ENCODE measurements at regions of chr6 and their contacts with region 1.

Region 1: DNA sequence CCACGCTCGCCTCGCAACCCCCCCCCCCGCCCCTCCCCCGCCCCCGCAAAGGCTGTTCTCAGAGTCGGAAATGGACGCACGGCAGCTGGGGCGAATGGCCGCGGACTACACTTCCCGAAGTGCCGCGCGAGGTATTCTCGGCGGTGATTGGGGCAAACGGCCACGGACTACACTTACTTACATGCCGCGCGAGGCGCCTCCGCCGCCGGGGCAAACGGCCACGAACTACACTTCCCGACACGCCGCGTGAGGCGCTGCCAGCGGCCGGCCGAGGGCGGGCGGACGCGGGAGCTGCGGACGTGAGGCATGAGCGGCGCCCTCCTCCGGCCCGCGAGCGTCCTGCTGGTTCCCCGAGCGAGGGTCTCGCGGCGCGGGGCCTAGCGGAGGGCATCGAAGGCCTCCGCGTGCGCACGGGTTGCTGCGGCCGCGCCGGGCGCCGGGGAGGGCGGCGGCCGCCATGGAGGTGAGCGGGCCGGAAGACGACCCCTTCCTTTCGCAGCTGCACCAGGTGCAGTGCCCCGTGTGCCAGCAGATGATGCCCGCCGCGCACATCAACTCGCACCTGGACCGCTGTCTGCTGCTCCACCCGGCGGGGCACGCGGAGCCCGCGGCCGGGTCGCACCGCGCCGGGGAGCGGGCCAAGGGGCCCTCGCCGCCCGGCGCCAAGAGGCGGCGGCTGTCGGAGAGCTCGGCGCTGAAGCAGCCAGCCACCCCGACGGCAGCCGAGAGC is at the start of gene WRNIP1:
- DNase-seq: peak; percentile 92 to 99 (median 96)
- ATAC-seq: peak; percentile 83
- H3K4me3 ChIP-seq: peak within 1 kb of the TSS; percentile 78
- H3K4me3 Mint-ChIP-seq: peak within 1 kb of the TSS; percentile 97
- H3K27ac ChIP-seq: peak within 1 kb of the TSS; percentile 80 to 96
- H3K27ac Mint-ChIP-seq: peak within 1 kb of the TSS; percentile 97
- H3K4me1 ChIP-seq: peaks cover 34% of the 10 kb centered on the region
- H3K4me1 Mint-ChIP-seq: peaks cover 61% of the 10 kb centered on the region
- H3K27me3 ChIP-seq: no peaks in the 10 kb centered on the region
- H3K27me3 Mint-ChIP-seq: no peaks in the 10 kb centered on the region
- CTCF ChIP-seq: peak; percentile 44
- total RNA-seq, gene WRNIP1: 22.4 to 25.2 TPM

Region 2: GRCh38 chr6:2738373-2738979 is 26.9 kb before region 1 on chr6:
- CTCF ChIA-PET with region 1: interaction called, 6 read pairs
- POLR2A ChIA-PET with region 1: no interaction called
- intact Hi-C with region 1: loop called in 1 of 2 experiments (anchors 1 kb)
- DNase-seq: peak; percentile 21 to 75 (median 43)
- ATAC-seq: peak; percentile 75
- H3K4me3 ChIP-seq: no peak overlapping the region
- H3K4me3 Mint-ChIP-seq: no peak overlapping the region
- H3K27ac ChIP-seq: no peak overlapping the region
- H3K27ac Mint-ChIP-seq: no peak overlapping the region
- H3K4me1 ChIP-seq: no peaks in the 10 kb centered on the region
- H3K4me1 Mint-ChIP-seq: no peaks in the 10 kb centered on the region
- H3K27me3 ChIP-seq: no peaks in the 10 kb centered on the region
- H3K27me3 Mint-ChIP-seq: peaks cover 4% of the 10 kb centered on the region
- CTCF ChIP-seq: peak; percentile 65

Region 3: DNA sequence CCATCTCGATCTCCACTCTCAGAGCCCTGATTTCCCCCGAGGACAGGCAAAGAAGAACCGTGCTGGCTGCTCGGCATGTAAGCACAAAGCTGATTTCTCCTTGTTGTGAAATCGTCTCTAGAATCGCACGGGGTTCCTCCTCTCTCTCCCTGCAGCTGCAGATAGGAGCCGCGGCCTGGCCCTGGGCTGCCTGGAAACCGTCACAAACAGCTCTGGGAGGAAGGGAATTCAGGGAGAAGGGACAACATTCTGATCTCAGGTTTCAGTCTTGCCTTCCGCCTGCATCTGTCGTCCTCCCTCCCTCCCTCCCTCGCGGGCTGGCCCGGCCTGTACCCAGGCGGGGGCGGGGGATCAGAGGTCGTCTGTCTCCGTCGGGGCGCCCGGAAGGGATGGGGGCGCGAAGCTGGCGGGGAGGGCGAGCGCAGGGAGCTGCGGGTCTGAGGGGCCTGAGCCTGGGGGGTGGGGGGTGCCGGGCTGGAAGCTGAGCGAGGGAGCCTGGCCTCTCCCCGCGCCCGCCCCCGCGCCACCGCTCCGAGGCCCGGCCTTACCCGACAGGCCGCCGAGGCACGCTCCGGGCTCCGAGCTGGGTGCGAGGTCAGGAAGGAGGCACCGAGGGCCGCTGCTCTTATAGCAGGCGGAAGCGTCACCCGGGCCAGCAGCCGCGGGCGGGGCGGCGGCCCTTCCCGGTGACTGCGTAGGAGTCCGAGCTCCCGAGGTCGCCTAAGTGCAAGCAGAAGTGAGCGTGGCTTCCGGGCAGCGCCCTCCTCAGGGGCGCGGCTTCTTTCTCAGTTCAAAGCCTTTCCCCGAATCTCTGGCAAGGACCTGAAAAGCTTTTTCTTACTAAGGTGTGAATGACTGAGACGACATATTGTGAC is 76.2 kb after region 1 on chr6 and contains the start of gene SERPINB1:
- CTCF ChIA-PET with region 1: interaction called, 5 read pairs
- POLR2A ChIA-PET with region 1: interaction called, 35 read pairs
- intact Hi-C with region 1: loop called in 1 of 2 experiments (anchors 2 kb)
- DNase-seq: peak; percentile 53 to 90 (median 71)
- ATAC-seq: peak; percentile 76
- H3K4me3 ChIP-seq: peak within 1 kb of the TSS; percentile 72
- H3K4me3 Mint-ChIP-seq: peak within 1 kb of the TSS; percentile 87
- H3K27ac ChIP-seq: peak within 1 kb of the TSS; percentile 76
- H3K27ac Mint-ChIP-seq: peak within 1 kb of the TSS; percentile 86
- H3K4me1 ChIP-seq: peaks cover 43% of the 10 kb centered on the region
- H3K4me1 Mint-ChIP-seq: peaks cover 70% of the 10 kb centered on the region
- H3K27me3 ChIP-seq: no peaks in the 10 kb centered on the region
- H3K27me3 Mint-ChIP-seq: no peaks in the 10 kb centered on the region
- CTCF ChIP-seq: no peak
- total RNA-seq, gene SERPINB1: 58.3 to 58.4 TPM

Region 4: DNA sequence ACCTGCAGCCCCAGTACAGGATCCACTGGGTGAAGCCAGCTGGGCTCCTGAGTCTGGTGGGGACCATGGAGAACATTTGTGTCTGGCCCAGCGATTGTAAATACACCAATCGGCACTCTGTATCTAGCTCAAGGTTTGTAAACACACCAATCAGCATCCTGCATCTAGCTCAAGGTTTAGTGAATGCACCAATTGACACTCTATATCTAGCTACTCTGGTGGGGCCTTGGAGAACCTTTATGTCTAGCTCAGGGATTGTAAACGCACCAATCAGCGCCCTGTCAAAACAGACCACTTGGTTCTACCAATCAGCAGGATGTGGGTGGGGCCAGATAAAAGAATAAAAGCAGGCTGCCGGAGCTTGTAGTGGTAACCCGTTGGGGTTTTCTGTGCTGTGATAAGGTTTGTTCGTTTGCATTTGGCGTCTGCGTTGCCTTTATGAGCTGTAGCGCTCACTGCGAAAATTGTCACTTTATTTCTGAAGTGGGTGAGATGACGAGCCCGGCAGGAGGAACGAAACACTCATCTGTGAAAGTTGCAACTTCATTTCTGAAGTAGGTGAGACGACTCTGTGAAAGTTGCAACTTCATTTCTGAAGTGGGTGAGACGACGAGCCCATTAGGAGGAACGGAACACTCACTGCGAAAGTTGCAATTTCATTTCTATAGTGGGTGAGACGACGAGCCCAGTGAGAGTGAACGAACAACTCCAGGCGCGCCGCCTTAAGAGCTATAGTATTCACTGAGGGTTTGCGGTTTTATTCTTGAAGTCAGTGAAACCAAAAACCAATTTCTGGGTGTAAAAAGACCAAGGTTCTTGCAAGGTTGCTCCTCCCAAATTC is 174.9 kb after region 1 on chr6:
- CTCF ChIA-PET with region 1: no interaction called
- POLR2A ChIA-PET with region 1: interaction called, 13 read pairs
- intact Hi-C with region 1: no loop called
- DNase-seq: peak; percentile 56 to 92 (median 66)
- ATAC-seq: peak; percentile 73
- H3K4me3 ChIP-seq: peak overlapping the region; percentile 66
- H3K4me3 Mint-ChIP-seq: peak overlapping the region; percentile 85
- H3K27ac ChIP-seq: peak overlapping the region; percentile 55 to 86
- H3K27ac Mint-ChIP-seq: peak overlapping the region; percentile 90
- H3K4me1 ChIP-seq: peaks cover 69% of the 10 kb centered on the region
- H3K4me1 Mint-ChIP-seq: peaks cover 66% of the 10 kb centered on the region
- H3K27me3 ChIP-seq: no peaks in the 10 kb centered on the region
- H3K27me3 Mint-ChIP-seq: no peaks in the 10 kb centered on the region
- CTCF ChIP-seq: no peak

Region 5: DNA sequence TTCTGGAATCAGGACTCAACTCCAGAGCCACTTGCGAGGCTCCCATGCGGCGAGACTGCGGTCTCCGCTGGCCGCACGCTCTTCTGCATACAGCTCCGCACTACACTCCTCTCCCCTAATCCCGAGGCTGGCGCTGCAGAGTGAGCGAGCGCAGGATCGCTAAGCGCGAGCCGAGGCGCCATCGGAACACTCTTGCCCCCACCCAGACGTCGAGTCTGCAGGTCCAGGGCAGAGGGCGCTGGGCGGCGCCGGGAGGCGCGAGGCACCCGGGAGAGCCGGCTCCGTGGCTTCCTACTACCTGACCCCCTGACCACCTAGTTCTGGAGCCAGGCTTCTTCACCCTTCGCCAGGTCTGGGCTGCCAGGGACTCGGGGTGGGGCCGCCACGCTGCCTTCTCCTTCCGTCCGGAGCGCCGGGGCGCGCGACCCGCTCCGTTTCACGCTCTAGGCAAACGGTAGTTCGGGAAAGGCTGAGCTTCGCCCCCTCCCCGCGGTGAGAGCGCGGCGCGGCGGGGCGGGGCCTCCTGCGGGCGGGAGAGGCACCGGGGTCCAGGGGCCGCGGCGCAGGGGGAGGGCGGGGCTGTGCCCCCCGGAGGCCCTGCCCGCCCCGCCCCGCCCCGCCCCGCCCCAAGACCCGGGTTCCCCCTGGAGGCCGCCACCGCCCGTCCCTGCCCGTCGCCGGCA is 397.4 kb after region 1 on chr6:
- CTCF ChIA-PET with region 1: no interaction called
- POLR2A ChIA-PET with region 1: no interaction called
- intact Hi-C with region 1: loop called in 1 of 2 experiments (anchors 10 kb)
- DNase-seq: peak; percentile 22 to 83 (median 44)
- ATAC-seq: peak; percentile 54
- H3K4me3 ChIP-seq: peak overlapping the region; percentile 80
- H3K4me3 Mint-ChIP-seq: peak overlapping the region; percentile 85
- H3K27ac ChIP-seq: peak overlapping the region; percentile 35 to 60
- H3K27ac Mint-ChIP-seq: peak overlapping the region; percentile 87
- H3K4me1 ChIP-seq: peaks cover 46% of the 10 kb centered on the region
- H3K4me1 Mint-ChIP-seq: peaks cover 46% of the 10 kb centered on the region
- H3K27me3 ChIP-seq: no peaks in the 10 kb centered on the region
- H3K27me3 Mint-ChIP-seq: peaks cover 10% of the 10 kb centered on the region
- CTCF ChIP-seq: no peak

Region 6: GRCh38 chr6:3356056-3356761 is 590.9 kb after region 1 on chr6:
- CTCF ChIA-PET with region 1: no interaction called
- POLR2A ChIA-PET with region 1: interaction called, 3 read pairs
- intact Hi-C with region 1: loop called in 1 of 2 experiments (anchors 10 kb)
- DNase-seq: peak; percentile 36 to 87 (median 58)
- ATAC-seq: peak; percentile 78
- H3K4me3 ChIP-seq: peak overlapping the region; percentile 50
- H3K4me3 Mint-ChIP-seq: peak overlapping the region; percentile 85
- H3K27ac ChIP-seq: peak overlapping the region; percentile 67 to 71
- H3K27ac Mint-ChIP-seq: peak overlapping the region; percentile 94
- H3K4me1 ChIP-seq: peaks cover 33% of the 10 kb centered on the region
- H3K4me1 Mint-ChIP-seq: peaks cover 47% of the 10 kb centered on the region
- H3K27me3 ChIP-seq: no peaks in the 10 kb centered on the region
- H3K27me3 Mint-ChIP-seq: no peaks in the 10 kb centered on the region
- CTCF ChIP-seq: no peak